CD8-positive, alpha-beta memory T cell (primary cell): ENCODE measurements at regions of chr16 and their contacts with region 1.

Region 1: DNA sequence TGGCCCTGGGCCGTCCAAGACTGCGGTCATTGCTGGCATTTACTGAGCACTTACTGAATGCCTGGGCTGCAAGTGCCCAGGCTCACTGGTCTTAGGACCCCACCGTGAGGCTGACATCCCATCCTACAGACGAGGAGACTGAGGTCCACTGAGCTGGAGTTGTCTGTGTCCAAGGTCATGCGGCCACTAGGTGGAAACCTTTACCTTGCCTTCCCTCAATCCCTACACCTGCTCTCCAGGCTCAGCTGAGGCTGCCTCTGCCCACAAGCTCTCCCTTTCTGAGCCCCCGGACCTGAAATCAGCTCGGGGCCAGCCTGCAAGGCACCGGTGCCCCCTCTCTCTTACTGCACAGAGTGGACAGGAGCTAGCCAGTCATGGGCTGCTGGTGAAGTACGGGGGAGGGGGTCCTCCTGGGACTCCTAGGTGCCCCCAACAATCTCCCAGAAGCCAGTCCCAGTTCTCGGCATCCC is 1.5 kb downstream of the CASKIN1 start:
- DNase-seq: peak in 4 of 5 donors; percentile 31 to 72 (median 48)
- H3K4me3 ChIP-seq: no peak overlapping the region
- H3K4me3 Mint-ChIP-seq: peak overlapping the region in 6 of 7 donors; percentile 44 to 83 (median 52)
- H3K27ac ChIP-seq: no peak overlapping the region
- H3K27ac Mint-ChIP-seq: peak overlapping the region in 1 of 8 donors; percentile 61
- H3K4me1 ChIP-seq: peaks cover 9% of the 10 kb centered on the region
- H3K4me1 Mint-ChIP-seq: peaks cover 0 to 13% (median 4%) of the 10 kb centered on the region in 3 donors
- H3K27me3 ChIP-seq: peaks cover 33% of the 10 kb centered on the region
- H3K27me3 Mint-ChIP-seq: peaks cover 27 to 30% of the 10 kb centered on the region in 2 donors

Region 2: GRCh38 chr16:2205104-2205966 is 10.4 kb after region 1 on chr16 and contains the start of gene MLST8:
- CTCF ChIA-PET with region 1: interaction called, 17 read pairs
- POLR2A ChIA-PET with region 1: interaction called, 3 read pairs
- DNase-seq: peak; percentile 88 to 98 (median 95)
- H3K4me3 ChIP-seq: peak within 1 kb of the TSS; percentile 84
- H3K4me3 Mint-ChIP-seq: peak within 1 kb of the TSS; percentile 82 to 95 (median 88)
- H3K27ac ChIP-seq: peak within 1 kb of the TSS; percentile 81
- H3K27ac Mint-ChIP-seq: peak within 1 kb of the TSS; percentile 76 to 94 (median 88)
- H3K4me1 ChIP-seq: peaks cover 17% of the 10 kb centered on the region
- H3K4me1 Mint-ChIP-seq: peaks cover 14 to 32% (median 21%) of the 10 kb centered on the region in 3 donors
- H3K27me3 ChIP-seq: no peaks in the 10 kb centered on the region
- H3K27me3 Mint-ChIP-seq: peaks cover 0 to 4% of the 10 kb centered on the region in 2 donors
- total RNA-seq, gene MLST8: 75.4 to 76.8 TPM

Region 3: DNA sequence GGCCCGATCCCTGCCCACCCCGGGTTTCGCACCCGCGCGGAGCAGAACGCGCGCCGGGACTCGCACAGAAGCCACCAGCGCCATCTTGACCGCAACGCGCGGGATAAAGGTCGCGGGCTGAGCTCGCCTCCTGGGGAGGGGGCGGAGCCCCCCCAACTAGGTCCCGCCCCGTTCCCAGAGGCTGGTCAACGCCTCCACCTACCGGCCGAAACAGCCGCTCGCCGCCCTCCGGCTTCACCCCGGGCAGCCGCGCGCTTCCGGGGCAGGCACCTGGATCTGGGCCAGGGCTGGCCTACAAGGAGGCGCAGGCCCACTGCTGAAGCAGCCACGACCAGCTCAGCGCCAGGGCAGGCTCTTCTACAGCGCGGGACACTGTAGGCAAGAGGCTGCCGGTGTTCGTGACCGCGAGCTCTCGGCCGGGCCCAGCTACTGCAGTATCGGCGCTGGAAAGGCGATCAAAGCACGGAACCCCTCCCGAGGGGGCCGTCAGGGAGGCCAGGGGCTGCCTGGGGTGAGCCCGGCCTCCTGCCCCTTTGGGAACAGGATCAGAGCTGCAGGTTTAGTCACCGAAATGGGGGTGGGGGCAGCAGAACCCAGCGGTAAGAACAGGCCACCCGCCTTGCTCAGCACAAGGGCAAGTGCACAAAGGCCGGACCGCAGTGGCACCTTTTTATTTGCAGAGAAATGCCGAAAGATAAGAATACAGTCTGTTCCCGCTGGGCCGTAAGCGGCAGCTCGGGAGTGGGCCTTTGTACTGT is 56.8 kb after region 1 on chr16 and contains the start of gene ECI1:
- CTCF ChIA-PET with region 1: interaction called, 30 read pairs
- POLR2A ChIA-PET with region 1: interaction called, 4 read pairs
- DNase-seq: peak; percentile 65 to 84 (median 74)
- H3K4me3 ChIP-seq: peak within 1 kb of the TSS; percentile 65
- H3K4me3 Mint-ChIP-seq: peak within 1 kb of the TSS; percentile 84 to 94 (median 89)
- H3K27ac ChIP-seq: peak within 1 kb of the TSS; percentile 76
- H3K27ac Mint-ChIP-seq: peak within 1 kb of the TSS; percentile 87 to 96 (median 92)
- H3K4me1 ChIP-seq: peaks cover 8% of the 10 kb centered on the region
- H3K4me1 Mint-ChIP-seq: peaks cover 3 to 12% (median 8%) of the 10 kb centered on the region in 3 donors
- H3K27me3 ChIP-seq: no peaks in the 10 kb centered on the region
- H3K27me3 Mint-ChIP-seq: no peaks in the 10 kb centered on the region
- total RNA-seq, gene ECI1: 30.3 to 33.1 TPM

Region 4: GRCh38 chr16:2500918-2501750 is 306.2 kb after region 1 on chr16:
- CTCF ChIA-PET with region 1: interaction called, 28 read pairs
- POLR2A ChIA-PET with region 1: interaction called, 3 read pairs
- DNase-seq: peak; percentile 70 to 85 (median 72)
- H3K4me3 ChIP-seq: no peak overlapping the region
- H3K4me3 Mint-ChIP-seq: no peak overlapping the region
- H3K27ac ChIP-seq: no peak overlapping the region
- H3K27ac Mint-ChIP-seq: peak overlapping the region in 1 of 8 donors; percentile 72
- H3K4me1 ChIP-seq: peaks cover 8% of the 10 kb centered on the region
- H3K4me1 Mint-ChIP-seq: no peaks in the 10 kb centered on the region
- H3K27me3 ChIP-seq: no peaks in the 10 kb centered on the region
- H3K27me3 Mint-ChIP-seq: no peaks in the 10 kb centered on the region